ENCODE measurements at regions of chr14 and their contacts with region 1.

Region 1: DNA sequence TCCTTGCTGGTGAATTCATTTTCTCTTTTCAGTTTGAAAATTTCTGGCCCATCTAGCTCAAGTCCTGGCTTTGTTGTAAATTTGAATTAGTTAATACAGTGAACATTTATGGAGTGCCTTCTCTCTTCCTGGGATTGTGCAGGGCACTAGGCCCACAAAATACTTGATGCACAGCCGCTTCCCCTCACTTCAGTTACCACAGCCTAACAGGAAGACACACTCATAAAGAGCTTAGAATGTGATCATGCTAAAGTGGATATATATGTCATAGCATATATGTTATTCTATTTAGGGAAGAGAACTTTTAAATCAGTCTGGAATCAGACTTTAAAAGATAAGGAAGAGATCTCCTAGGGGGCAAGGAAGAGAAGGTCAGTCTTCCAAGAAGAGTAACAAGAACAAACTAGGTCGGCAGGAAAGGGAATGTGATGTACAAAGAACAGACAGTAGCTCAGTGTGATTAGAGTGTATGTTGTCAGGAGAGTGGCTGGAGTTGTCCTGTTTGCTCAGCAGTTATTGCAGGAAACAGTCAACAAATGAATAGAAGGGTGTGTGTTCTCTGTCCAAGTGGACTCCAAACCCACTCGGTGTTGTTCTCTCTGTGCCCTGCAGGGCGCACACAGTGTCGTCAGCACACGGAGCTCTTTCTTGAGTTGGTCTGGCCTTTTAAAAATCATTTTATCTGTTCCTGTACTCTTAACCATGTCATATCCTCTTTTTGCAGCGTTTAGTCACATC is 74.4 kb downstream of the DAAM1 start:
- DNase-seq: no peak
- H3K4me3 ChIP-seq: no peak overlapping the region
- H3K27ac ChIP-seq: no peak overlapping the region
- H3K4me1 ChIP-seq: peaks cover 1% of the 10 kb centered on the region
- H3K27me3 ChIP-seq: no peaks in the 10 kb centered on the region
- CTCF ChIP-seq: no peak
- EP300 ChIP-seq: no peak
- POLR2A ChIP-seq: no peak

Region 2: GRCh38 chr14:58626431-58626831 is 636.5 kb before region 1 on chr14:
- intact Hi-C with region 1: no loop called
- DNase-seq: no peak
- H3K4me3 ChIP-seq: no peak overlapping the region
- H3K27ac ChIP-seq: no peak overlapping the region
- H3K4me1 ChIP-seq: no peaks in the 10 kb centered on the region
- H3K27me3 ChIP-seq: no peaks in the 10 kb centered on the region
- CTCF ChIP-seq: no peak
- EP300 ChIP-seq: no peak
- POLR2A ChIP-seq: no peak

Region 3: DNA sequence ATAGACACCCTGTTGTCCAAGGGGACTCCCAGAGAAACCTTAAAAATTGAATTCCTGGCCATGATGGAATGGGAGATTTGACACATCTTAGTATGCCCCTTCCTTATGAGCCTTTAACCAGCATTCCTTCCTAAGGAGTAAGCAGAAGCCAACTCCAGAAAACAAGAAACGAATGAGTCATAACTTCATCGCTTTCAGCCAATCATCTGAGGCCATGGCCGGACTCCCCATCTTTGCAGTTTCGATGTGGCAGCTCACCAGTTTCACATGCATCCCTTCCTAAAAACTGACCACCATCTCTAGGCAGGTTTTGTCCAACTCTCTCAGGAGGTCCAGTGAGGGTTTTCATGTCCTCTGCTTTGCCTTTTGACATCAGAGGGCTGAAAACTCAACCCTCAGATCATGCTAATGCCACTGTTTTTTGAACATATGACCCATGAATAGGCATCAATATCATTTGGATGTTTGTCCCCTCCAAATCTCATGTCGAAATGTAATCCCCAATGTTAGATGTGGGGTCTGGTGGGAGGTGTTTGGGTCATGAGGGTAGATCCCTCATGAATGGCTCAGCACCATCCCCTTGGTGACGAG is 54.6 kb before region 1 on chr14:
- intact Hi-C with region 1: loop called in 1 of 4 experiments (anchors 10 kb)
- DNase-seq: no peak
- H3K4me3 ChIP-seq: no peak overlapping the region
- H3K27ac ChIP-seq: no peak overlapping the region
- H3K4me1 ChIP-seq: peaks cover 10% of the 10 kb centered on the region
- H3K27me3 ChIP-seq: no peaks in the 10 kb centered on the region
- CTCF ChIP-seq: no peak
- EP300 ChIP-seq: no peak
- POLR2A ChIP-seq: no peak

Measured in ovary (tissue), 10 donors.